IMR-90 (cell line): ENCODE measurements at regions of chr3 and their contacts with region 1.

Region 1: DNA sequence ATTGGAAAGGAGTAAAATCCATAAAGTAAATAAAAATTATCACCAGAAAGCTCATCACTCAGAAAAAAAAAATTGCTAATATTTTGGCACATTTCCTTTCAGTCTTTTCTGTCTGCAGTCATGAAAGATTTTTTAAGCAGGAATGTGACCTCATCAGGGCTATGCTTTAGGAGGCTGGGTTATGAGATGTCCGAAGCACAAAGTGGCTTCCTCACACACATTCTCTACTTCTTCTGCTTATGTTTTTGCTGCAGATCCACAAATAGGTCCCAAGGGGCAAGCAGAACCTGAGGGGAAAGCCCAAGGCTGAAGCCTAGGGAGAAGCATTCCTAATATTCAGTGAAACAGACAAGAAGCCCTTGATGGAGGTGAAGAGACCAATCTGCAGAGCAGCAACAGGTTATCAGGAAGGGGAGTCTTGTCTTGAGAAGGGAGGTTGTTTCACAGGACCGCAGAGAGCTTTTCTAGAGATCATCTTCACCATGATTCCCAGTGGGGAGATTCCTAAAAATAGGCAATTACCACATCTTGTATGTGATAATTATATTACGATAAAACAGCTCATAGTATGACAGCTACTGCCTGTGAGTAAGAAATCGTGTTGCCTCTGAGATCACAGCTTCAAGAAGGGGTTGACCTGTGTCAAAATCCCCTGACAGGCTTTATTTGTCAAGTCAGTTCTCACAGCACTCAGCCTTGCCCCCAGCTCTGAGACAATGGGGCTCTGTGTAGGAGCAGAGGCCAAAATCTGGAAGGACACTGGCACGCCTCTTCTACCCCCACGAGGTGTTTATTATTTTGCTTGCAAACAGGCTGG is 60.5 kb downstream of the IGF2BP2 start:
- DNase-seq: peak; percentile 54
- ATAC-seq: peak; percentile 27; the same call in 1 of the 2 replicates
- H3K4me3 ChIP-seq: no peak overlapping the region
- H3K27ac ChIP-seq: no peak overlapping the region
- H3K4me1 ChIP-seq: peaks cover 36% of the 10 kb centered on the region
- H3K27me3 ChIP-seq: no peaks in the 10 kb centered on the region
- CTCF ChIP-seq: no peak
- POLR2A ChIP-seq: no peak
- RAD21 ChIP-seq: no peak

Region 2: GRCh38 chr3:185677146-185677829 is 87.1 kb before region 1 on chr3:
- CTCF ChIA-PET with region 1: interaction called, 3 read pairs
- POLR2A ChIA-PET with region 1: no interaction called
- dilution Hi-C with region 1: no loop called
- in situ Hi-C with region 1: no loop called
- intact Hi-C with region 1: loop called (anchors 5 kb)
- DNase-seq: peak; percentile 77
- ATAC-seq: peak; percentile 94
- H3K4me3 ChIP-seq: no peak overlapping the region
- H3K27ac ChIP-seq: no peak overlapping the region
- H3K4me1 ChIP-seq: no peaks in the 10 kb centered on the region
- H3K27me3 ChIP-seq: no peaks in the 10 kb centered on the region
- CTCF ChIP-seq: peak; percentile 65
- POLR2A ChIP-seq: no peak
- RAD21 ChIP-seq: peak; percentile 78

Region 3: GRCh38 chr3:185779461-185779860 is 15.1 kb after region 1 on chr3:
- CTCF ChIA-PET with region 1: interaction called, 22 read pairs
- POLR2A ChIA-PET with region 1: interaction called, 3 read pairs
- dilution Hi-C with region 1: no loop called
- in situ Hi-C with region 1: no loop called
- intact Hi-C with region 1: no loop called
- DNase-seq: no peak
- ATAC-seq: no peak
- H3K4me3 ChIP-seq: no peak overlapping the region
- H3K27ac ChIP-seq: no peak overlapping the region
- H3K4me1 ChIP-seq: peaks cover 26% of the 10 kb centered on the region
- H3K27me3 ChIP-seq: no peaks in the 10 kb centered on the region
- CTCF ChIP-seq: no peak
- POLR2A ChIP-seq: no peak
- RAD21 ChIP-seq: no peak

Region 4: DNA sequence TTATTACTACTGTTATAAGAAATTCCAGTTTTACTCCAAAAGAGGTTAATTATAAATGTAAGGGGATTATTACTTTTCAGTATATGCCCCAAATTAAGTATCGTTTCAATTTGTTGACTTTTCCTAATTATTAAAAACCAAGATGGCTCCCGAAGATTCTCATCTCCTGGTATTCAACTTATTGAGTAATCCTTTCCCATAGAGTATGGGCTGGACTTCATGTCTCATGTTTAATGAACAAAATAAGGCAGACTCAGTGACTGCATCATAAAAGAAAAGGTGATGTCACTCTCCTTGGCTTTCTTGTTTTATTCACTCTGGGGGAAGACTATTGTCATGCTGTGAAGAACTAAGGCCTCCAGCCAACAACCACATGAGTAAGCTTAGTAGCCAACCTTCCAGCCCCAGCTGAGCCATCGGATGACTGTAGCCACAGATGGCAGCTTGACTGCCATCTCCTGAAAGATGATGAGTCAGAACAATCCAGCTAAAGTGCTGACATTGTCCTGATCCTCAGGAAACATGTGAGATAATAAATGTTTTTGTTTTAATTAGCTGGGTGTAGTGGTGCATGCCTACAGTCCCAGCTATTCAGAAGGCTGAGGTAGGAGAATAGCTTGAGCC is 43.2 kb after region 1 on chr3:
- CTCF ChIA-PET with region 1: interaction called, 8 read pairs
- POLR2A ChIA-PET with region 1: no interaction called
- dilution Hi-C with region 1: no loop called
- in situ Hi-C with region 1: no loop called
- intact Hi-C with region 1: loop called (anchors 2 kb)
- DNase-seq: peak; percentile 94
- ATAC-seq: peak; percentile 57; the same call in 1 of the 2 replicates
- H3K4me3 ChIP-seq: no peak overlapping the region
- H3K27ac ChIP-seq: no peak overlapping the region
- H3K4me1 ChIP-seq: peaks cover 10% of the 10 kb centered on the region
- H3K27me3 ChIP-seq: no peaks in the 10 kb centered on the region
- CTCF ChIP-seq: no peak
- POLR2A ChIP-seq: no peak
- RAD21 ChIP-seq: no peak

Region 5: GRCh38 chr3:186254676-186255650 is 490.6 kb after region 1 on chr3:
- CTCF ChIA-PET with region 1: no interaction called
- POLR2A ChIA-PET with region 1: no interaction called
- dilution Hi-C with region 1: no loop called
- in situ Hi-C with region 1: no loop called
- intact Hi-C with region 1: no loop called
- DNase-seq: no peak
- ATAC-seq: no peak
- H3K4me3 ChIP-seq: no peak overlapping the region
- H3K27ac ChIP-seq: no peak overlapping the region
- H3K4me1 ChIP-seq: no peaks in the 10 kb centered on the region
- H3K27me3 ChIP-seq: peaks cover 28% of the 10 kb centered on the region
- CTCF ChIP-seq: no peak
- POLR2A ChIP-seq: no peak
- RAD21 ChIP-seq: no peak

Region 6: GRCh38 chr3:186760141-186760813 is 995.9 kb after region 1 on chr3:
- CTCF ChIA-PET with region 1: no interaction called
- POLR2A ChIA-PET with region 1: no interaction called
- dilution Hi-C with region 1: no loop called
- in situ Hi-C with region 1: no loop called
- intact Hi-C with region 1: no loop called
- DNase-seq: no peak
- ATAC-seq: no peak
- H3K4me3 ChIP-seq: no peak overlapping the region
- H3K27ac ChIP-seq: no peak overlapping the region
- H3K4me1 ChIP-seq: no peaks in the 10 kb centered on the region
- H3K27me3 ChIP-seq: no peaks in the 10 kb centered on the region
- CTCF ChIP-seq: no peak
- POLR2A ChIP-seq: no peak
- RAD21 ChIP-seq: no peak